HCT116 (cell line): ENCODE measurements at regions of chr2 and their contacts with region 1.

Region 1: DNA sequence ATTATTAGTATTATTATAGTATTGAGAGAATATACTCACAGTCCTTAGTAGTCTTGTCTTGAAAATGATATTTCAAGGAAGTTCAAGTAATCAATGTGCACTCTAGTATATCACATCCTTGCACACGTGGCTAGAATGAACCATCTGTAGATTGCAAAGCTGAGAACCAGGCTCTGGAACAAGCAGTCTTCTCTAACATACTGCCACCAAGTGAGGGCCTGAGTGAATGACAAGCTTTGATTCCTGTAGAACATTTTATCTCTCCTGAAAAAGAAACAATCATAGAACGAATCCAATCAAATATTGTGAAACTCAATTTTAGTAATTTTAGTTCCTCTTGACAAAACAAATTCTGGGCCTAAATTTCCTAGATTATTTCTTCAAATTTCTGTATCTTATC is 55.3 kb upstream of the SULT1C3 start:
- DNase-seq: peak; percentile 4
- ATAC-seq: peak; percentile 57; the same call in 1 of the 2 replicates
- H3K4me3 ChIP-seq: no peak overlapping the region
- H3K27ac ChIP-seq: no peak overlapping the region
- H3K4me1 ChIP-seq: no peaks in the 10 kb centered on the region
- H3K27me3 ChIP-seq: no peaks in the 10 kb centered on the region
- CTCF ChIP-seq: peak in 2 of 3 experiments; percentile 46 to 49; a peak in 4 of 6 replicates
- POLR2A ChIP-seq: no peak
- RAD21 ChIP-seq: 0 out of 2 replicates have a peak, but pooled peaks have one; percentile 23

Region 2: GRCh38 chr2:106638043-106638442 is 1546.4 kb before region 1 on chr2:
- CTCF ChIA-PET with region 1: interaction called, 5 read pairs
- POLR2A ChIA-PET with region 1: no interaction called
- RAD21 ChIA-PET with region 1: no interaction called
- intact Hi-C with region 1: loop called (anchors 2 kb)
- DNase-seq: no peak
- ATAC-seq: no peak; the same call in 1 of the 2 replicates
- H3K4me3 ChIP-seq: no peak overlapping the region
- H3K27ac ChIP-seq: no peak overlapping the region
- H3K4me1 ChIP-seq: no peaks in the 10 kb centered on the region
- H3K27me3 ChIP-seq: 0 out of 2 replicates have a peak, but pooled peaks cover 5% of the 10 kb centered on the region
- CTCF ChIP-seq: peak; percentile 13 to 55 (median 15); a peak in 4 of 6 replicates
- POLR2A ChIP-seq: no peak
- RAD21 ChIP-seq: peak; percentile 44

Region 3: GRCh38 chr2:107146181-107146580 is 1038.2 kb before region 1 on chr2:
- CTCF ChIA-PET with region 1: no interaction called
- POLR2A ChIA-PET with region 1: no interaction called
- RAD21 ChIA-PET with region 1: no interaction called
- intact Hi-C with region 1: no loop called
- DNase-seq: no peak
- ATAC-seq: no peak
- H3K4me3 ChIP-seq: no peak overlapping the region
- H3K27ac ChIP-seq: no peak overlapping the region
- H3K4me1 ChIP-seq: no peaks in the 10 kb centered on the region
- H3K27me3 ChIP-seq: no peaks in the 10 kb centered on the region
- CTCF ChIP-seq: no peak
- POLR2A ChIP-seq: no peak
- RAD21 ChIP-seq: no peak

Region 4: DNA sequence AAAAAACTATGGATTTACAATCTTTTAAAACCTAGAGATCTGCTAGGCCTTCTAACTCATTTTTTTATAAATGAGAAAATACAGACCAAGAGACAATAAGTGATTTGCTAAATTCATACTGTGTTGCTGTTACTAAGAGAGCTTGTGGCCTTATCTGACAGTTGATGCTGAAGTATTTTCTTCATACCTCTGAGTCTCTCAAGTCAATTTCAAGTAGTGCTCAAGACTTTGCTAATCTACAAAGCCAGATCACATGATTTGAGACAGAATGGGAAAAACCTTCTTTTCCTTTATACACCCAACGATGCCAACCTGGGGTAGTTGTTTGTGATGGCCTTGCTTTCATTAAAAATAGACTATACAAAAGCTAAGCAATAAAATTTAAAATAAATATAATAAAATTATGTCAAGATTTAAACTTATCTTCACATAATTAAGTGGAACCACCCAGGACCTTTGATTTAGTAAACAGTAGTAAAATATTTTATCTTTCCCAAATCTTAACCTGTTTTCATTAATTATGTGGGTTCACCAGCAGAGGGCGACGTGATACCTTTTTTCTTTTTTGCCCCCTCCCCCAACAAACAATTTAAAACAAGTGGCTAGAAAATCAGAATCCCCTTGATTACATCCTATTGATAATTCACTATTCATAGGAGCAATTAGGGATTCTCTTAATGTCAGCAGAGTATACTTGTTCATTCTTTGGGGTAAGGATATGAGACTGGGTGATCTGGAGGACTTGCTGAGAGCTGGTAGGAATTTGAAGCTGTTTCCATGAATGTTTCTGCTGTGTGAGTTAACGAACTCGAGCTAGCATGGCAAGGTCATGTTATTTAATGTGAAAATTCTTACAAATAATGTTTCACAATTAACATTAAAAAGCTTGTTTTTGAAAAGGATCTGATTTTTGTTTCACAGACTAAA is 247.7 kb before region 1 on chr2:
- CTCF ChIA-PET with region 1: interaction called, 5 read pairs
- POLR2A ChIA-PET with region 1: no interaction called
- RAD21 ChIA-PET with region 1: no interaction called
- intact Hi-C with region 1: loop called (anchors 5 kb)
- DNase-seq: no peak
- ATAC-seq: no peak
- H3K4me3 ChIP-seq: no peak overlapping the region
- H3K27ac ChIP-seq: no peak overlapping the region
- H3K4me1 ChIP-seq: no peaks in the 10 kb centered on the region
- H3K27me3 ChIP-seq: no peaks in the 10 kb centered on the region
- CTCF ChIP-seq: peak; percentile 16 to 57 (median 26); a peak in 3 of 6 replicates
- POLR2A ChIP-seq: no peak
- RAD21 ChIP-seq: peak; percentile 45

Region 5: DNA sequence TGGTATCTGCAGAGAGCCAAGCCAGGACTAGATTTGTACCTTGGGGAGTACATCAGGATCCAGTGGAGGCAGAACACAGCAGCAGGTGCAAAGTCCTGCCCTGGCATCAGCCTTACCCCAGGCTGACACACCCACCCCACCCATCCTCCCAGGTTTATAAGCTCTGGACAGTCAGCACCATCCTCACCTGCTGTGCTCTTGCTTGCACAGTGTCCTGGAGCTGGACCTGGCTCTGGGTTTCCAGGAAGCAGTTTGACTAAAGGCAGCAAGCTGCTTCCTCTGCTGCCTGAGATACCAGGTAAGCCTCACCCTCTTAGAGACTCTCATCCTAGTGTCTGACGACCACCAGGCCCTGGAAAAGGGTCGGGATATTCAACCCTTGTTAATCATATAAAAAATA is 55.4 kb after region 1 on chr2 and contains the start of gene SULT1C3:
- CTCF ChIA-PET with region 1: no interaction called
- POLR2A ChIA-PET with region 1: no interaction called
- RAD21 ChIA-PET with region 1: no interaction called
- intact Hi-C with region 1: no loop called
- DNase-seq: no peak
- ATAC-seq: no peak
- H3K4me3 ChIP-seq: no peak within 1 kb of the TSS
- H3K27ac ChIP-seq: no peak within 1 kb of the TSS
- H3K4me1 ChIP-seq: no peaks in the 10 kb centered on the region
- H3K27me3 ChIP-seq: no peaks in the 10 kb centered on the region
- CTCF ChIP-seq: no peak
- POLR2A ChIP-seq: no peak
- RAD21 ChIP-seq: no peak
- total RNA-seq, gene SULT1C3: not detected

Region 6: GRCh38 chr2:108417255-108417654 is 232.8 kb after region 1 on chr2:
- CTCF ChIA-PET with region 1: no interaction called
- POLR2A ChIA-PET with region 1: no interaction called
- RAD21 ChIA-PET with region 1: no interaction called
- intact Hi-C with region 1: no loop called
- DNase-seq: peak; percentile 41
- ATAC-seq: peak; percentile 98
- H3K4me3 ChIP-seq: no peak overlapping the region
- H3K27ac ChIP-seq: no peak overlapping the region
- H3K4me1 ChIP-seq: peaks cover 0 to 12% of the 10 kb centered on the region in 2 experiments; a peak in 3 of 4 replicates
- H3K27me3 ChIP-seq: no peaks in the 10 kb centered on the region
- CTCF ChIP-seq: peak; percentile 41 to 93 (median 50); a peak in 5 of 6 replicates
- POLR2A ChIP-seq: no peak
- RAD21 ChIP-seq: peak; percentile 69